T-cell (primary cell): ENCODE measurements at regions of chr3 and their contacts with region 1.

Region 1: DNA sequence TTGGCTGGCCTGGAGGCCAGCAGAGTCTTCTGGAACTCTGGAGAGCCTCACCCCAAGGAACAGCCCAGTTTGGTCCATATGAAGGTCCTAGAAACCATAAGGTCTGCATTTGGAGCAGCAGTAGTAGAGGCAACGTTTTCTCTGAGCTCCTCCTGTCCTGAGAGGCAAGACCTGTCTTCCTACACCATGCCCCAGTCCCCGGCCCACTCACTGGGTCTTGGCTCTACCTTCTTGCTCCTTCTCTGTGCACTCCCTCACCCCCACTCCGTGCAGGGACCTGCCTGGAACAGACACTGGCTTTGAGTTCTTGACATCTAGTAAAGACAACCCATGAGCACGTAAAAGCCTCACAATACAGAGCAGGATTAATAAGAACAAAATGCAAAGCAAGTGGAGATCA is 76.6 kb downstream of the CHRD start:
- DNase-seq: no peak
- ATAC-seq: no peak
- H3K4me3 ChIP-seq: no peak overlapping the region
- H3K4me3 Mint-ChIP-seq: no peak overlapping the region
- H3K27ac ChIP-seq: no peak overlapping the region
- H3K27ac Mint-ChIP-seq: no peak overlapping the region
- H3K4me1 ChIP-seq: no peaks in the 10 kb centered on the region
- H3K4me1 Mint-ChIP-seq: no peaks in the 10 kb centered on the region
- H3K27me3 ChIP-seq: peaks cover 0 to 7% of the 10 kb centered on the region in 2 experiments
- H3K27me3 Mint-ChIP-seq: peaks cover 0 to 4% of the 10 kb centered on the region in 2 donors

Region 2: DNA sequence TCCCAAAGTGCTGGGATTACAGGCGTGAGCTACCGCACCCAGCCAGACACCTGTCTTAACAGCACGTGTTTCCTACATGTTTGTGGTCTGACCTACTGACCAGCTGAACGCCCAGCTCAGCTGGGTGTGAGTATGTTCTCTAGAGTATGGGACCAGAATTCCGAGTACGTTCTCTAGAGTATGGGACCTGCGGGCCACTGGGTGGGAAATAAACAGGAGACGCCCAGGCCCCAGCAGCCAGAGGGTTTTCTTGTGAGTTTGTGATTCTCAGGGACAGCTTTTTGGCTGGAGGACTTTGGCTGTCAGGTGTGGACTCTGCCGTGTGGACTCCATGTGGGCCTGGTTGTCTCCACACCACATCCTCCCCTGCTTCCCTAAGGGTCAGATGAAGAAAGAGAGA is 10.7 kb after region 1 on chr3:
- CTCF ChIA-PET with region 1: interaction called in 1 of 2 experiments, 12 read pairs
- POLR2A ChIA-PET with region 1: no interaction called
- DNase-seq: no peak
- ATAC-seq: no peak
- H3K4me3 ChIP-seq: no peak overlapping the region
- H3K4me3 Mint-ChIP-seq: no peak overlapping the region
- H3K27ac ChIP-seq: no peak overlapping the region
- H3K27ac Mint-ChIP-seq: no peak overlapping the region
- H3K4me1 ChIP-seq: peaks cover 0 to 4% of the 10 kb centered on the region in 2 experiments
- H3K4me1 Mint-ChIP-seq: peaks cover 5 to 11% (median 5%) of the 10 kb centered on the region in 3 donors
- H3K27me3 ChIP-seq: peaks cover 0 to 28% of the 10 kb centered on the region in 2 experiments
- H3K27me3 Mint-ChIP-seq: peaks cover 17 to 38% of the 10 kb centered on the region in 2 donors